Mammary epithelial cell (primary cell): ENCODE measurements at regions of chr16 and their contacts with region 1.

Region 1: GRCh38 chr16:23930791-23931190 is 95.0 kb downstream of the PRKCB start:
- DNase-seq: no peak
- H3K4me3 ChIP-seq: no peak overlapping the region
- H3K27ac ChIP-seq: no peak overlapping the region
- H3K4me1 ChIP-seq: no peaks in the 10 kb centered on the region
- H3K27me3 ChIP-seq: no peaks in the 10 kb centered on the region
- CTCF ChIP-seq: no peak

Region 2: GRCh38 chr16:23858542-23858941 is 72.2 kb before region 1 on chr16:
- CTCF ChIA-PET with region 1: no interaction called
- dilution Hi-C with region 1: loop called (anchors 5 kb)
- in situ Hi-C with region 1: no loop called
- intact Hi-C with region 1: no loop called
- DNase-seq: peak; percentile 4
- H3K4me3 ChIP-seq: no peak overlapping the region
- H3K27ac ChIP-seq: no peak overlapping the region
- H3K4me1 ChIP-seq: no peaks in the 10 kb centered on the region
- H3K27me3 ChIP-seq: no peaks in the 10 kb centered on the region
- CTCF ChIP-seq: no peak

Region 3: DNA sequence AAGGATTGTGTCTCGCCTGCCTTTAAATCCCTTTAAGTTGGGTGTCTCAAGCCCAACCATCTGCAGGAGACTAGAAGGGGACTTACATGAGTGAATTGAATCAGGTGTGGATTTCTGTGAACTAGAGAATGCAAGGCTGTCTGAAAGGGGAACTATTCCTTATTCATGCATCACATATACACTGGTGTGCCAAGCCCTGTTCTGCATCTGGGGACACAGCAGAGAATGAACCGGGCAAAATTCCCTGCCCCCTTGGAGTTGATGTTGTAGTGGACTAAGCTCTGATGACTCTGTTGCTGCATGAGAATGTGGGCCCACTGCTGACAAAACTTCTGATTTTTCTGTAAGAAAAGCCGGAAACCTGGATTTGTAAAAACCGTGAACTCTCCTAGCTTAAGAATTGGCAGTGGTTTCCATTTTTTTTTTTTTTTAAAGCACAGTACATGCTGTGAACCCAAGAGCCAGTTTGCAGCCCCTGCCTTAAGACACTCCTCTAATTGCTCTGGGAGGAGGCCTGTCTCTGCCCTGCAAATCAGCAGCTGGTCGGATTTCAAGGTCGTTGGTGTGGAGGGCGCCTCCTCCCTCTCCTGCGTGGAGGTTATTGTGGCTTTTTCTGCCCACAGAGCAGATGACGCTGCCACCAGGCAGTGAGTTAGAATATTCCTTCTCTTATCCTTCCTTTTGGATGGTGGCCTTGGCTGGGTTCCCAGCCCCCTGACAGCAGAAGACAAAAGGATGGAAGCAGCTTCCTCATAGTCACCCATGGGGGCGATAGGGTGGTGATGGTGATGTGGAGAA is 36.0 kb after region 1 on chr16:
- CTCF ChIA-PET with region 1: no interaction called
- dilution Hi-C with region 1: loop called (anchors 5 kb)
- in situ Hi-C with region 1: no loop called
- intact Hi-C with region 1: no loop called
- DNase-seq: no peak
- H3K4me3 ChIP-seq: no peak overlapping the region
- H3K27ac ChIP-seq: no peak overlapping the region
- H3K4me1 ChIP-seq: no peaks in the 10 kb centered on the region
- H3K27me3 ChIP-seq: no peaks in the 10 kb centered on the region
- CTCF ChIP-seq: no peak